ENCODE measurements at regions of chr1 and their contacts with region 1.

Region 1: DNA sequence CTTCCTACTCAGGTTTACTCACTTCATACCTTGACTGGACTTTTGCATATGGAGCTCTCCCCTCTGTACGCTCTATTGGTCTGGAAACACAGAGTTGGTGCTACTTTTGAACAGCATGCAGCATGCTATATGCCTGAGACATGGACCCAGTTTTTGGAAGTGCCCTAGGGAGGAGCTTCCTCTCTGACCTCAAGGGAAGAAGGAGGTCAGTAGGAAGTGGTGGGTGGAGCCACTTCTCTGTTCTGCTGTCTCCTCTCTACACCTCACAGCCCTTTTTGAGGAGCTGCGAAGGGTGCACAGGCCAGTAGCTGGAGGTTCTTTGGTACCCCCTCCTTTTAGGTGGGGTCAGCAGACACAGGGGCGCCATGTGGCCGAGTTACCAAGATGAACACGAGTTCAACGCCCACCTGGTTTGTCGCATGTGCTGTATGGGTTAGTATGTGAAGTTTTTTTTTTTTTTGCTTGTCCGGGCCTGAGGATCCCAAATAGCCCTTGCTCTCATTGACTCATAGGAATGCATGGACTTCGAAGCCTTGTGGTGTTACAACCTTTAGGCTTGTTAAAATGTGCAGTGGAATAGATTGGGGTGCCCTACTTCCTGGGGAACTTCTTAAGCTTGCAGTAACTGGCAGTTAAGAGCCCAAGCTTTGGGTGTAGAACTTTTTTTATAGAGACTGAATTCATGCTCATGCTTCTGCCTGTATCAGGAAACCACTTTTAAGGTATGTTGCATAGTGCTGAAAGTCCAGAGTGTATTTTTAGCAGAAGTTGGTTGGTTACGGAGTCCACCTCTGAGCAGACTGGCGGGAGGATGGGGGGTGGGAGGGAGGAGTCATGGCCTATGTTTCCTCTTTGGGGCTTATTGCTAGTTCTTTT is 10.7 kb downstream of the MACF1 start:
- DNase-seq: peak; percentile 79
- ATAC-seq: peak; percentile 87
- H3K4me3 ChIP-seq: peak overlapping the region; percentile 85
- H3K27ac ChIP-seq: peak overlapping the region; percentile 87
- H3K4me1 ChIP-seq: peaks cover 19% of the 10 kb centered on the region
- H3K27me3 ChIP-seq: no peaks in the 10 kb centered on the region
- CTCF ChIP-seq: no peak
- EP300 ChIP-seq: no peak
- POLR2A ChIP-seq: peak; percentile 84
- RAD21 ChIP-seq: no peak

Region 2: GRCh38 chr1:39076127-39076798 is 139.0 kb before region 1 on chr1:
- CTCF ChIA-PET with region 1: no interaction called
- POLR2A ChIA-PET with region 1: no interaction called
- RAD21 ChIA-PET with region 1: no interaction called
- SMC1A ChIA-PET with region 1: no interaction called
- in situ Hi-C with region 1: no loop called
- intact Hi-C with region 1: no loop called
- DNase-seq: no peak
- ATAC-seq: no peak
- H3K4me3 ChIP-seq: no peak overlapping the region
- H3K27ac ChIP-seq: no peak overlapping the region
- H3K4me1 ChIP-seq: no peaks in the 10 kb centered on the region
- H3K27me3 ChIP-seq: peaks cover 2 to 5% of the 10 kb centered on the region in 2 experiments; a peak in 2 of 4 replicates
- CTCF ChIP-seq: no peak
- EP300 ChIP-seq: no peak
- POLR2A ChIP-seq: no peak
- RAD21 ChIP-seq: no peak

Region 3: GRCh38 chr1:39105061-39105840 is 110.0 kb before region 1 on chr1:
- CTCF ChIA-PET with region 1: interaction called, 4 read pairs
- POLR2A ChIA-PET with region 1: no interaction called
- RAD21 ChIA-PET with region 1: interaction called, 9 read pairs
- SMC1A ChIA-PET with region 1: interaction called, 18 read pairs
- in situ Hi-C with region 1: no loop called
- intact Hi-C with region 1: no loop called
- DNase-seq: no peak
- ATAC-seq: peak; percentile 51
- H3K4me3 ChIP-seq: peak overlapping the region; percentile 94
- H3K27ac ChIP-seq: peak overlapping the region; percentile 67
- H3K4me1 ChIP-seq: peaks cover 40% of the 10 kb centered on the region
- H3K27me3 ChIP-seq: no peaks in the 10 kb centered on the region
- CTCF ChIP-seq: no peak
- EP300 ChIP-seq: no peak
- POLR2A ChIP-seq: peak; percentile 75
- RAD21 ChIP-seq: no peak

Region 4: DNA sequence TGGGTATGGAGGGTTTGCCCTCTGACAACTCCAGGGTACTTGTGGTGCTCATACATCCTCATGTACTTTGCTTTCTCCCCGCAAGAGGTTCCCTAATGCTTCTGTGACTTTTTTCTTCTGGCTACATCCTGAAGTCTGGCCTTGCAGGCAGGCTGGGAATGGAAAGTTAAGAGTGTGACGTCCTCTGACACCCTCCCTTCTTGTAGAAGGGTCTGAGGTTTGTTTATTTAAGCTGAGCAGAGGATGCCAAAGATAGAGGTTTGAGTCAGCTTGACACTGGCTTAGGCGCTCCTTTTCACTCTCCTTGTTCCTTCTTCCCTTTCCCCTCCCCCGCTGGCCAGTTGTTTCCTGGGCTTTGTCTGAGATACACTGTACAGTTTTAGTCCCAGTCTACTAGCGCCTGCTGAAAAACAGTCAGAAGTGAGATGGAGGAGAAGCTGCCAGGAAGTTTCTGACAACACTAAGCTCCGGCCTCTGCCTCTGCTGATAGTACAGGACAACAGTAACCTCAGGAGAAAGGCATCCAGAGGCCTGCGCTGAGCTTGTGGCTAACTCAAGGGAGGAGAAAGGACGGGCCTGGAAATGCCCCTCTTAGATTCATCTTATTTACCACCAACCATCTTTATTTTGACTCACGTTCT is 10.7 kb before region 1 on chr1 and contains the start of gene MACF1:
- CTCF ChIA-PET with region 1: interaction called, 39 read pairs
- POLR2A ChIA-PET with region 1: interaction called, 53 read pairs
- RAD21 ChIA-PET with region 1: interaction called, 66 read pairs
- SMC1A ChIA-PET with region 1: interaction called, 86 read pairs
- in situ Hi-C with region 1: no loop called
- intact Hi-C with region 1: no loop called
- DNase-seq: no peak
- ATAC-seq: peak; percentile 70
- H3K4me3 ChIP-seq: peak within 1 kb of the TSS; percentile 67
- H3K27ac ChIP-seq: peak within 1 kb of the TSS; percentile 83
- H3K4me1 ChIP-seq: peaks cover 12% of the 10 kb centered on the region
- H3K27me3 ChIP-seq: no peaks in the 10 kb centered on the region
- CTCF ChIP-seq: no peak; a peak in 1 of 6 replicates
- EP300 ChIP-seq: no peak
- POLR2A ChIP-seq: no peak
- RAD21 ChIP-seq: 0 out of 2 replicates have a peak, but pooled peaks have one; percentile 15
- polyA plus RNA-seq, gene MACF1: 15.5 to 25.1 TPM

Region 5: DNA sequence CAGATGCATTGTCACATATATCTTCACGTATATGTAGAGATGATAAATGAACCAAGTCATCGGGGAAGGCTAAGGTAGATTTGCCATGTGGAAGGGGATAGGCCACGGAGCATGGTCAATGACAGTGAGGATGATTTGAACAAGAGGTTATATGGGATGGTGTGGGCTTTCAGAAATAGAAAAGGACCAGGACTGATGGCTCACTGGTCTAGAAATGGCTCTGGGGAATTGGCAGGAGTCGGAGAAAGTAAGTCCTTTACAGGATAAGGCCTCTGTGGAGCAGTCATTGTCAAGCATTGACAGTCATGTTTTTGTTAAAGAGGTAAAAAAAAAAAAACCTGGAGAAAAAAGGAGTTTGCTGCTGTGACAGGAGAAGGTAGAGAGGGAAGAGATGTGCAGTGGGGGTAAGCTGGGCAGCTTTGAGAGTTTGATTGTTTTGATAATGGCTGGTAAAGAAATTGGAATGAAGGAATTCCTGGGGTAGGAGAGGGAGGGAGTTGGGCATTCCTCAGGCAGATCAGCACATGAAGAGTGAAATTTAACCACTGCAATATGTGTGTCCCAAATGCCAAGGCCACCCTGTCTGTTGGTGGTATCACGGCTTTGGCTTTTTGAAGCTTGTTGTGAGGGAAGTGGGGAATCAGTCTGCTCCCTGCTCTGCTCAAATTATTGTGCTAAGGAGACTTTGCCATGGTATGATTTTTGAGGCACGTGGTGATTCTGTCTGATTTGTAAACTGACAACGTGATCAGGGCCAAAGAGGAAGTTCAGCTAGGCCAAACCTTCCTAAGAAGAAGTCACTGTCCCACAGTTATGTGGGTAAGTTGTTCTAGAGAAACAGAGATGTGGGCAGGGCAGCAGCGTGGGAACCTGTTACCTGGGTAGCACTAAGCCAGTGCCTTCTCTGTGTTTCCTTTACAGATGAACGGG is 15.3 kb after region 1 on chr1:
- CTCF ChIA-PET with region 1: interaction called, 13 read pairs
- POLR2A ChIA-PET with region 1: interaction called, 6 read pairs
- RAD21 ChIA-PET with region 1: interaction called, 5 read pairs
- SMC1A ChIA-PET with region 1: interaction called, 20 read pairs
- in situ Hi-C with region 1: no loop called
- intact Hi-C with region 1: no loop called
- DNase-seq: peak; percentile 57
- ATAC-seq: peak; percentile 85
- H3K4me3 ChIP-seq: no peak overlapping the region
- H3K27ac ChIP-seq: no peak overlapping the region
- H3K4me1 ChIP-seq: peaks cover 10% of the 10 kb centered on the region
- H3K27me3 ChIP-seq: no peaks in the 10 kb centered on the region
- CTCF ChIP-seq: no peak
- EP300 ChIP-seq: no peak
- POLR2A ChIP-seq: no peak
- RAD21 ChIP-seq: no peak

Region 6: DNA sequence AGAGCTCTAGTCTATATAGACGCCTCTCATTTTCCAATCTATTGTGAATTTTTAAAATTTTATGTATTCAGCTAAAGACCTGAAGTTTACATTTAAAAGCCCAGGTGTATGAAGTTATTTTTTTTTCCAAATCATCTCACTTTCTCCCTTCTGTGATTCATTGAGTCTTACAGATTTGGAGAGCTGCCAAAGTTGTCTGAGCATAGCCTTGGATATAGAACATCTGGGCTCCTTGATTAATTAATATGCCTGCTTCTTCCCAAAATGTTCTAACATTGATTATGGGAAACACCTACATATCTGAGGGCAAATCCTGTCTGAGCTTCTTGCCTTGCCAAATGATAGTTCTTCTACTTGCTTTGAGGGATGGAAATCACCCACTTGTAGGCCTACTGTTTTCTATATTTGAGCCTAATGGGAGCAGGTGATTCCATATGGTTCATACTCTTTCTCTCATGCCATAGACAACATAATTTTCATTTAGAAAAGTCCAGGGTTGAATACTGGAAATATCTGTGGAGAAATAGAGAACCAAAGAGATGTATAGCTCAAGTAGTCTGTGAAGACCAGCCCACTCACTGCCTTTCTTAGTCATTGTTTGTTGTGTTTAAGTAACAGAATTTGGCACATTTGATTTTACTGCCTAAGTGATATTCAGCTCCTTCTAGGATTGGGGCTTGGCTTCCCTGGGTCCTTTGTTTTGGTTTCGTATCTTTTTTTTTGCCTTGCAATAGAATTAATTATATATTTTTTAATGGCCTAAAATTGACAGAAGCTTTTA is 35.4 kb after region 1 on chr1:
- CTCF ChIA-PET with region 1: interaction called, 3 read pairs
- POLR2A ChIA-PET with region 1: interaction called, 4 read pairs
- RAD21 ChIA-PET with region 1: interaction called, 4 read pairs
- SMC1A ChIA-PET with region 1: interaction called, 11 read pairs
- in situ Hi-C with region 1: no loop called
- intact Hi-C with region 1: no loop called
- DNase-seq: no peak
- ATAC-seq: no peak
- H3K4me3 ChIP-seq: no peak overlapping the region
- H3K27ac ChIP-seq: no peak overlapping the region
- H3K4me1 ChIP-seq: peaks cover 2% of the 10 kb centered on the region; the same call in 1 of the 2 replicates
- H3K27me3 ChIP-seq: no peaks in the 10 kb centered on the region
- CTCF ChIP-seq: no peak
- EP300 ChIP-seq: no peak
- POLR2A ChIP-seq: no peak
- RAD21 ChIP-seq: no peak

Region 7: GRCh38 chr1:39268112-39268581 is 52.9 kb after region 1 on chr1:
- CTCF ChIA-PET with region 1: interaction called, 6 read pairs
- POLR2A ChIA-PET with region 1: interaction called, 14 read pairs
- RAD21 ChIA-PET with region 1: interaction called, 20 read pairs
- SMC1A ChIA-PET with region 1: interaction called, 9 read pairs
- in situ Hi-C with region 1: no loop called
- intact Hi-C with region 1: no loop called
- DNase-seq: no peak
- ATAC-seq: peak; percentile 29
- H3K4me3 ChIP-seq: peak overlapping the region; percentile 57; the same call in 1 of the 2 replicates
- H3K27ac ChIP-seq: peak overlapping the region; percentile 81
- H3K4me1 ChIP-seq: peaks cover 57% of the 10 kb centered on the region
- H3K27me3 ChIP-seq: no peaks in the 10 kb centered on the region
- CTCF ChIP-seq: no peak
- EP300 ChIP-seq: no peak
- POLR2A ChIP-seq: peak; percentile 38; the same call in 1 of the 2 replicates
- RAD21 ChIP-seq: no peak

Region 8: GRCh38 chr1:39332291-39332690 is 117.1 kb after region 1 on chr1:
- CTCF ChIA-PET with region 1: no interaction called
- POLR2A ChIA-PET with region 1: no interaction called
- RAD21 ChIA-PET with region 1: no interaction called
- SMC1A ChIA-PET with region 1: no interaction called
- in situ Hi-C with region 1: no loop called
- intact Hi-C with region 1: no loop called
- DNase-seq: no peak
- ATAC-seq: no peak
- H3K4me3 ChIP-seq: no peak overlapping the region
- H3K27ac ChIP-seq: no peak overlapping the region
- H3K4me1 ChIP-seq: no peaks in the 10 kb centered on the region; the same call in 1 of the 2 replicates
- H3K27me3 ChIP-seq: no peaks in the 10 kb centered on the region
- CTCF ChIP-seq: no peak
- EP300 ChIP-seq: no peak
- POLR2A ChIP-seq: no peak
- RAD21 ChIP-seq: no peak

Region 9: DNA sequence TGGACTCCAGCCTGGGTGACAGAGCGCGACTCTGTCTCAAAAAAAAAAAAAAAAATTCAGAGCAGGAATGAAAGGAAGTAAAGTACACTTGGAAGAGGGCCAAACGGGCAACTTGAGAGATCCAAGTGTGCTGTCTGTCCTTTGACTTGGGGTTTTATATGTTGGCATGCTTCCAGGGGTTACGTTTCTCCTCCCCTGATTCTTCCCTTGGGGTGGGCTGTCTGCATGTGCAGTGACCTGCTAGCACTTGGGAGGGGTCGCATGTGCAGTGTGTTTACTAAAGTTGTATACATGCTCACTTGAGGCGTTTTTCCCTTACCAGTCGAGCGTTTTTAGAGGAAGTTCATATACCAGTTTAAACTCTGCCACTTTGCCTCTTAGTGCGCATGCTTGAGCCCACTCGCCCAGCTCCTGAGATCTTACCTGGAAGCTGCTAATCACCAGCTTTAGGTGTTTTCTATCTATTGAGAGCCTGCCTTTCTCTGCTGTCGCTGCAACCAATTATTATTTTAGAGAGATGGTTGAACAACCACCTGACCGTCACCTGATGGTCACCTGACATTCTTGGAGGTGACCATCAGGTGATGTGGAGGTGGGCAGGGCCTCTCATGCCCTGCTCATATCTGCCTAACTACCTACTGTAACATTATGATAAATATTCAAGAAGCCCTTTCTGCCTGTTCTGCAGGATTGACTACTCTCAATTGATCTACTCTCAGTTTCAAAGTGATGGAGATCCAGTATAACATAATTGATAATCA is 129.3 kb after region 1 on chr1:
- CTCF ChIA-PET with region 1: no interaction called
- POLR2A ChIA-PET with region 1: no interaction called
- RAD21 ChIA-PET with region 1: no interaction called
- SMC1A ChIA-PET with region 1: no interaction called
- in situ Hi-C with region 1: no loop called
- intact Hi-C with region 1: no loop called
- DNase-seq: no peak
- ATAC-seq: no peak
- H3K4me3 ChIP-seq: no peak overlapping the region
- H3K27ac ChIP-seq: no peak overlapping the region
- H3K4me1 ChIP-seq: no peaks in the 10 kb centered on the region
- H3K27me3 ChIP-seq: no peaks in the 10 kb centered on the region
- CTCF ChIP-seq: no peak
- EP300 ChIP-seq: no peak
- POLR2A ChIP-seq: no peak
- RAD21 ChIP-seq: no peak

Region 10: GRCh38 chr1:40373338-40374283 is 1158.4 kb after region 1 on chr1 and contains the start of gene SMAP2:
- CTCF ChIA-PET with region 1: no interaction called
- POLR2A ChIA-PET with region 1: no interaction called
- RAD21 ChIA-PET with region 1: no interaction called
- SMC1A ChIA-PET with region 1: no interaction called
- in situ Hi-C with region 1: no loop called
- intact Hi-C with region 1: no loop called
- DNase-seq: peak; percentile 85
- ATAC-seq: peak; percentile 87
- H3K4me3 ChIP-seq: peak within 1 kb of the TSS; percentile 86
- H3K27ac ChIP-seq: peak within 1 kb of the TSS; percentile 94
- H3K4me1 ChIP-seq: peaks cover 9% of the 10 kb centered on the region
- H3K27me3 ChIP-seq: no peaks in the 10 kb centered on the region
- CTCF ChIP-seq: no peak
- EP300 ChIP-seq: no peak
- POLR2A ChIP-seq: peak; percentile 89
- RAD21 ChIP-seq: no peak
- polyA plus RNA-seq, gene SMAP2: 33.4 to 42.4 TPM